Sigmoid colon (tissue), 7 donors: ENCODE measurements at regions of chr11 and their contacts with region 1.

Region 1: DNA sequence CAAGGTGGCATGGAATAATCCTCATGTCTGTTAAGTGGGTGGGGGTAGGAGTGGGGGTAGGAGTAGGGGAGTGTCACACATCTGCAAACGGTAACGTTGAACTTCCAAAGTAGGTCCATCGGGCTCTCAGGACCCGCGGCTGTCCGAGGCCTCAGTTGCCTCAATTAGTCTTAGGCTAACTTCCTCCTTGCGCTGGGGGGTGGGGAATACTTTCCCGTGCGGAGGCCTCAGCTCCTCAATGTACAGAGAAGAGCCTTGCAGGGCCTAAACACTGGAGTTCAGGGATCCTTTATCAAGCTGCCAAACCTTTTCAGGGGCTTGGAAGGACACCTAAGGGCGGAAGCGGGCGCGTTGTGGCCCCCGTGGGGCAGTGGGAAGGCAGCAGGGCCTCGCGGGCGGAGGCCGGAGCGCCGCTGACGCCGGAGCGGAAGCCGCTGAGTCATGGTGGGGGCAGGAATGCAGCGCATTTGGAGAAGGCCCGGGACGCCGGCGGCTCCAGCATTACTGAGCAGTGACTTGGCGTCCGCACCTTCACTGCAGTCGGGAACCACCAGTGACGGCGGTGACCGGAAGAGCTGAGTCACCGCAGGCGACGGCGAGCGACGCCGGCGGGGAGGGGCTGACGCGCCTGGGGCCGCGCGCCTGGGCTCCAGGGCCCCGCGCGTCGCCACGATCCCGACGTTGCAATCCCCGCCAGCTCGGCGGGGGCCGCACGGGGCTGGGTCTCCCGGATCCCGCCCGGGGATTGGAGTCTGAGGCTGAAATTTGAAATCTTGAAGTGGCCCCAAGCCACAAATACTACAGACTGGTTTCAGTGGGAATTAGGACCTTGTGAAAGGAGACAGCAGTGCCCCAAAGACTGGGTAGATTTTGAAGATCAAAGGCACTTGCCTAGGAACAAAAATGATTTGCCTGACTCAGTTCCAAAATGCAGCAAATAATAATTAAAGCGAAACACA is 20.2 kb upstream of the IPO7 start:
- DNase-seq: peak; percentile 98
- H3K4me3 ChIP-seq: peak overlapping the region; percentile 31 to 53 (median 46)
- H3K27ac ChIP-seq: peak overlapping the region; percentile 91 to 96 (median 95)
- H3K4me1 ChIP-seq: peaks cover 0 to 19% (median 15%) of the 10 kb centered on the region in 4 donors
- H3K27me3 ChIP-seq: no peaks in the 10 kb centered on the region
- CTCF ChIP-seq: no peak
- EP300 ChIP-seq: peak in 3 of 4 donors; percentile 67 to 77 (median 76)
- POLR2A ChIP-seq: peak in 1 of 2 donors; percentile 46

Region 2: GRCh38 chr11:9314291-9315036 is 49.8 kb before region 1 on chr11 and contains the start of gene TMEM41B:
- intact Hi-C with region 1: loop called (anchors 1 kb)
- DNase-seq: peak; percentile 98
- H3K4me3 ChIP-seq: peak within 1 kb of the TSS; percentile 72 to 100 (median 91)
- H3K27ac ChIP-seq: peak within 1 kb of the TSS; percentile 82 to 86 (median 84)
- H3K4me1 ChIP-seq: peaks cover 0 to 27% (median 16%) of the 10 kb centered on the region in 4 donors
- H3K27me3 ChIP-seq: no peaks in the 10 kb centered on the region
- CTCF ChIP-seq: no peak
- EP300 ChIP-seq: no peak
- POLR2A ChIP-seq: peak; percentile 65 to 69
- total RNA-seq, gene TMEM41B: 20.3 to 22.2 (median 20.5) TPM

Region 3: DNA sequence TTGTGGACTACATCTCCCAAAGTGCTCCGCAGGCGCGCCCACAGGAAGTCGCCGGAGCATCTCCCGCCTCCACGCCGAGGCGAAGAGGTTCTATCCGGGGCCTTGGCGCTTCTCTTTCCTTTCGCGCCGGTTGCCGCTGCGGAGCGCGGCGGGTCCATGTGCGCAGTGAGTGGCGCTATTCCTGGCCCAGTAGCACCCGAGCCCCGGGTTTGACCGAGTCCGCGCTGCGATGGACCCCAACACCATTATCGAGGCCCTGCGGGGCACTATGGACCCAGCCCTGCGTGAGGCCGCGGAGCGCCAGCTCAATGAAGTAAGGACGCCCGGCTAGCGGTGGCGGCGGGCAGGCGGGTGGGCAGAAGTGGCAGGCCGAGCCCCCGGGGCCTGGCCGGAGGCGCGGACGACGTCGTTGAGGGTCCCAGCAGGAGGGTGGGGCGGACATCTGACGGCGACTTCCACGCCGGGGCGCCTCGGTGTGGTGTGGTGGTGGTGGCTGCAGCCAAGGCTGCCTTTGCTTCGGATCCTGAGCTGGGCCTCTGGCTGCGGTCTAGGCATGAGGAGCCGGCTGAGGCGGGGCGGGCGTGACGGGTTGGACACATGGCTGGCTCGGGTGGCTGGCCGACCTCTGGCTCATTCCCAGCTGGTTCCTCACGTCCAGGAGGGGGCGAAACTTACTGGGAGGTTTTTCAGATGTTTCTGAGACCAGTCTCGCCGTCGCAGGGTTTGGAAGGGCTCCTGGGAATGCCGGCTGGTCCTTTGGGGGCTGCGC is 20.5 kb after region 1 on chr11 and contains the start of gene IPO7:
- intact Hi-C with region 1: loop called (anchors 1 kb)
- DNase-seq: peak; percentile 95
- H3K4me3 ChIP-seq: peak within 1 kb of the TSS; percentile 87 to 94 (median 88)
- H3K27ac ChIP-seq: peak within 1 kb of the TSS; percentile 95 to 96 (median 96)
- H3K4me1 ChIP-seq: peaks cover 0 to 60% (median 43%) of the 10 kb centered on the region in 4 donors
- H3K27me3 ChIP-seq: no peaks in the 10 kb centered on the region
- CTCF ChIP-seq: peak in 1 of 4 experiments; percentile 8
- EP300 ChIP-seq: no peak
- POLR2A ChIP-seq: peak; percentile 81 to 84
- total RNA-seq, gene IPO7: 121 to 180 (median 145) TPM

Region 4: DNA sequence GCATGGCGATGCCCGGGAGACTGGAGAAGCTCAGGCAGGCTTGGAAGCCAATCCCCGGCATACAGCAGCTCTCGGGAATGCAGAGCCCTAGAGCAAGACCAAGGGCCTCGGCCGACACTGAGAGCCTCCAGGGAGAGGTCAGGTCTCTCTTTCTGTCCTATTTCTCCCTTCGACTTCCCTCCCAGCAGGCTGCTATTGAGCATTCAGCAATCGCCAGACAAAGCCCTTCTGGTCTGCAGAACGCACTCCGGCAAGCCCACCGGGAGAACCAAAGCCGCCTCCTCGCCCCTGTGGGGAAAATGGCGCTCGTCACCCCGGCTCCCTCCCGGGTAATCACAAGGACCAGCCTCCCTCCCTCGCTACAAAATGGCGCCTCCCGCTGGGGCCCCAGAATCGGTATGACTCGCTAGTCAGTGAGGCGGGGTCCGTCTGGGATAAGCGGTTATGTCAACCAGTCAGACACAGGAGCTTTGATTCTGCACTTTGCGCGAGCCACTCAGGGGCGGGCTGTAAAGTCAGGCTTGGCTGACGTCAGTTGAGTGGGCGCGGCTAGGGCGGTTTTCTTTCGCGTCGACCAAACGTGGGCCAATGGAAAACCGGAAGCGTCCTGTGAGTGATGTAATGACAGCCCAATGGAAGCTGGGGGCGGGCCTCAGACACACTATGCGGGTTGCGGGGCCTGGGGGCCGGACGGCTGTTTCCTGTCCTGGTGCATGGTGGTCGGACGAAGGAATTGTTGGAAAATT is 96.3 kb after region 1 on chr11 and contains the start of gene ZNF143:
- intact Hi-C with region 1: loop called (anchors 5 kb)
- DNase-seq: peak; percentile 100
- H3K4me3 ChIP-seq: peak within 1 kb of the TSS; percentile 68 to 95 (median 82)
- H3K27ac ChIP-seq: peak within 1 kb of the TSS; percentile 95 to 100 (median 100)
- H3K4me1 ChIP-seq: peaks cover 0 to 27% (median 20%) of the 10 kb centered on the region in 4 donors
- H3K27me3 ChIP-seq: no peaks in the 10 kb centered on the region
- CTCF ChIP-seq: peak in 2 of 4 experiments; percentile 4 to 28
- EP300 ChIP-seq: peak in 1 of 4 donors; percentile 8
- POLR2A ChIP-seq: peak; percentile 99
- total RNA-seq, gene ZNF143: 20.2 to 48.4 (median 32.4) TPM